B cell (primary cell): ENCODE measurements at regions of chr16 and their contacts with region 1.

Region 1: DNA sequence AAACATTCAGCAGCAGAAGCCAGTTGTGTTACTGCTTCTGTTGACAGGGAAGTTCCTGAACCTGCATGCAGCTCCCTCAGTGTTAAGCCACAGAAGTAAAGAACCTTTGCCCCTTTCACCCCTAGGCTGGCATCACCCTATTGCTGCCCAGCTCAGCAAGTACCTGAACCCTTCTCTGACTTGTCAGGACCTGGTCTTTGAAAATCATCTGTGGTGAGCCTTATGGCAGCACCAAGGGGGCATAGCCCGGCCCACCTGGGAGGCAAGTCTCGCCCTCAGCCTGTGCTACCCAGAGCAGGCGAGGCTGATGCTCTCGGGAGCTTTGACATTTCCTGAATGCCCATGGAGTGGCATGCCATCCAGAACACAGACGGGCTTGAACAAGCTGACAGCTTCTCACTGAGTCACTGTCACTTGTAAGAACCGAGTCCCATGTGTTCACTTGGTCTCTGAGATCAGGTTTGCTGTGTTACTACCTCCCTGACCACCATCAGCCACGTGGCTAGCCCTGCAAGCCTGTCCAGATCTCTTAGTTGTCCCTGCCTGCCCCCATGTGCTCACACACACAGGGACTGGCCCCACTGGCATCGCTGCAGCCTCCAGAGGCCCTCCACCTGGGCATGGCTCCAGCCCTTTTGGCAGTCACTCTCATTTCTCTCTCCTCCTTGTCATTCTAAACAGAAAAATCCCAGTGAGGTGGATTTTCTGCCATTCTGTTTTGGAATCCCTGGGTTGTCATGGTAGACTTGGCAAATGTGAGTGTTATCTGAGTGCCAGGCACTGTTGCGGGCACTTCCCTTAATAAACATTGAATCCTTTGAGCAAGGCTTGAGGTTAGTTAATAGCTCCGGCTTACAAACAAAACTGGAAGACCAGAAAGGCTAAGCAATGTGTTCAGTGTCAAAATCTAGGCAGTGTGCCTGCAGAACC is 2.9 kb upstream of the CARMIL2 start:
- DNase-seq: no peak
- ATAC-seq: no peak
- H3K4me3 ChIP-seq: no peak overlapping the region
- H3K4me3 Mint-ChIP-seq: no peak overlapping the region
- H3K27ac ChIP-seq: no peak overlapping the region
- H3K27ac Mint-ChIP-seq: no peak overlapping the region
- H3K4me1 ChIP-seq: peaks cover 12 to 20% of the 10 kb centered on the region in 2 donors
- H3K4me1 Mint-ChIP-seq: peaks cover 16% of the 10 kb centered on the region
- H3K27me3 ChIP-seq: no peaks in the 10 kb centered on the region
- H3K27me3 Mint-ChIP-seq: no peaks in the 10 kb centered on the region
- CTCF ChIP-seq: no peak

Region 2: DNA sequence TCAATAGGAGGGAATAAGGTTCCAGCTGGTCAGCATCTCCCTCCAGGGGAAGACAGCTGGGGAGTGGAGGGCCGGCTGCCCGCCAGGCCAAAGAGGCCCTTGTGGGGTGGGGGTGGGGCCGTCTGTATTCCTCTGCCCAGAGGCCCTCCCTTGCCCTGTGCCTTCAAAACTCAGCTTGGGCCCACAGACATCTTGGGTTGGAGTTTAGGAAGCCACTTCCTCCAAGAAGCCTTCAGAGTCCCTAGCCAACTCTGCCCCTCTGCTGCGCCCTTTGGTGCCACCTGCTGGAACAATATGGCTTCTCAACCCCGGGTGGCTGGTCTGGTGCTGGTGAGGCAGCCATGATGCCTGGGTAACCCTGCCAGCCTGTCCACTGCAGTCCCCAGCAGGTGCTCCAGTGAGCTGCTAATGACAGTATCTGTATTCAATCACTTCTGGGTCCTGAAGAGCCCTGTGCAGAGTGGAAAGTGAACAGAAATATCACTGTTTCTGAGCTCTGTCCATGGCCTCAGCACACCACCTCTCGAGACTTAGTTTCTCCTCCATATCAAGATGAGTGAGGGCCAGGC is 194.5 kb before region 1 on chr16:
- CTCF ChIA-PET with region 1: no interaction called
- POLR2A ChIA-PET with region 1: no interaction called
- intact Hi-C with region 1: no loop called
- DNase-seq: peak; percentile 55
- ATAC-seq: peak; percentile 59
- H3K4me3 ChIP-seq: no peak overlapping the region
- H3K4me3 Mint-ChIP-seq: no peak overlapping the region
- H3K27ac ChIP-seq: no peak overlapping the region
- H3K27ac Mint-ChIP-seq: no peak overlapping the region
- H3K4me1 ChIP-seq: no peaks in the 10 kb centered on the region
- H3K4me1 Mint-ChIP-seq: no peaks in the 10 kb centered on the region
- H3K27me3 ChIP-seq: no peaks in the 10 kb centered on the region
- H3K27me3 Mint-ChIP-seq: no peaks in the 10 kb centered on the region
- CTCF ChIP-seq: peak; percentile 39

Region 3: GRCh38 chr16:67490335-67491096 is 151.5 kb before region 1 on chr16:
- CTCF ChIA-PET with region 1: interaction called, 44 read pairs
- POLR2A ChIA-PET with region 1: interaction called, 3 read pairs
- intact Hi-C with region 1: loop called (anchors 1 kb)
- DNase-seq: no peak
- ATAC-seq: no peak
- H3K4me3 ChIP-seq: no peak overlapping the region
- H3K4me3 Mint-ChIP-seq: peak overlapping the region; percentile 51
- H3K27ac ChIP-seq: peak overlapping the region; percentile 70 to 89
- H3K27ac Mint-ChIP-seq: peak overlapping the region; percentile 82
- H3K4me1 ChIP-seq: peaks cover 73 to 84% of the 10 kb centered on the region in 2 donors
- H3K4me1 Mint-ChIP-seq: peaks cover 71% of the 10 kb centered on the region
- H3K27me3 ChIP-seq: no peaks in the 10 kb centered on the region
- H3K27me3 Mint-ChIP-seq: no peaks in the 10 kb centered on the region
- CTCF ChIP-seq: no peak

Region 4: DNA sequence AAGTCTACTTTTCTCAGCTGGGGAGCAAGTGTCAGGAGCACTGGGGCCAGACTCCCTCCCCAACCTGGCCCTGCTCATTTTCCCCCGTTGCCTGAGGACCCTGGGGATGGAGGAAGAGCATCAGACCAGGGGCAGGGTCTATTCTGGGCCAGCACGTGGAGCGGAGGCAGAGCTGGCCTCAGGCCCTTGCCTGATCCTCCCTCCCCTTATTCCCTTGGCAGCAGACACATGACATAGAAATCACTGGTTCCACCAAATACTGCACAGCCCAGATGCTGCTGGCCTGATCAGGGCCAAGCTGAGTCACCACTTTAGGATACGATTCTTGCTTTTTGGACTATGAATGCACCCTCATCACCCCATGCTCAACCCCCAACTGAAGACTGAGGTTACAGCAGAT is 142.9 kb before region 1 on chr16:
- CTCF ChIA-PET with region 1: interaction called, 44 read pairs
- POLR2A ChIA-PET with region 1: interaction called, 3 read pairs
- intact Hi-C with region 1: loop called (anchors 1 kb)
- DNase-seq: no peak
- ATAC-seq: no peak
- H3K4me3 ChIP-seq: no peak overlapping the region
- H3K4me3 Mint-ChIP-seq: no peak overlapping the region
- H3K27ac ChIP-seq: no peak overlapping the region
- H3K27ac Mint-ChIP-seq: peak overlapping the region; percentile 70
- H3K4me1 ChIP-seq: peaks cover 13 to 17% of the 10 kb centered on the region in 2 donors
- H3K4me1 Mint-ChIP-seq: peaks cover 29% of the 10 kb centered on the region
- H3K27me3 ChIP-seq: no peaks in the 10 kb centered on the region
- H3K27me3 Mint-ChIP-seq: no peaks in the 10 kb centered on the region
- CTCF ChIP-seq: no peak

Region 5: DNA sequence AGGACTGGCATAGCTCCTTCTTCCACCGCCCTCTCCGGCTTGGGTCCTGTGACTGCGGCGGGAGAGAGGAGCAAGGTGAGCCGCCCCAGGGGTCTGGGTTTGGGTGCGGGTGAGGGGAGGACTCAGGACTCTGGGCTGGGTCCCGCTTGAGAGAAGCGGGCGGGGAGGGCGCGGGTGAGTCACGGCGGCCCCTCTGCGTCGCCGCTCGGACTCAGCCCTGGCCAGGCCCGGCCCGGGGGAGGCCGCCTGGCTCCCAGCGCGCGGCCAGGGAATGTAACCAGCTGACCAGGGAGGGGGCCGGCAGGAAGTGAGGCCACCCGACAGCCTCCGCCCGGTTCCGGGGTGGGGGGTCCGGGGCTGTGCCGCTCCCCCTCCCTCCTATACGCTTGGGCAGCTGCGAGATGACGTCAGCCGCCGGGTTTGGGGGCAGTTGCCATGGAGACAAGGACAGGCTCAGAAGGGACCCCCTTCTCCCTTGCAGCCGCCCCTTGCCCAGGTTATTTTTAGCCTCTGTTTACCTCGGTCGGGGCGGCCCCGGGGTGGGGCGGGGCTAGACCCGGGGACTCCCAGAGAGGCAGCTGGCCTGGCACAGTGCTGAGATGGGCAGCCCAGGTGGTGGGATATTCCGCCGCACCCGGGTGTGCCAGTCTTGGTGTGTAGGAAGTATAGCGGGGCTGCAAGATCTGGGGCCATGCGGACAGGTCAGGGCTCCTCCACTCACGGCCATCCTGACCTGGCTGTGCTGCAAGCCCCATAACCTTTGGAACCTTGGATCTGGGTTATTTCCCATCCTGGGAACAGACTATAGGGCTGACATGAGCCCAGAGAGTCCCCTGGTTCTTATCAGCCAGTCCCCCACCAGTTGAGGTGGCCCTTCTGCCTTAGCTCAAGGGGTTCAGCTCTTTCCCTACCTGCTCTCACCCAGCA is 111.8 kb before region 1 on chr16:
- CTCF ChIA-PET with region 1: interaction called, 80 read pairs
- POLR2A ChIA-PET with region 1: interaction called, 5 read pairs
- intact Hi-C with region 1: no loop called
- DNase-seq: peak; percentile 94
- ATAC-seq: peak; percentile 59
- H3K4me3 ChIP-seq: peak overlapping the region; percentile 65 to 92 (median 85)
- H3K4me3 Mint-ChIP-seq: peak overlapping the region; percentile 95
- H3K27ac ChIP-seq: peak overlapping the region; percentile 96 to 100
- H3K27ac Mint-ChIP-seq: peak overlapping the region; percentile 98
- H3K4me1 ChIP-seq: peaks cover 38 to 70% of the 10 kb centered on the region in 2 donors
- H3K4me1 Mint-ChIP-seq: peaks cover 63% of the 10 kb centered on the region
- H3K27me3 ChIP-seq: no peaks in the 10 kb centered on the region
- H3K27me3 Mint-ChIP-seq: no peaks in the 10 kb centered on the region
- CTCF ChIP-seq: no peak

Region 6: GRCh38 chr16:67555795-67556212 is 86.2 kb before region 1 on chr16:
- CTCF ChIA-PET with region 1: interaction called, 64 read pairs
- POLR2A ChIA-PET with region 1: interaction called, 3 read pairs
- intact Hi-C with region 1: no loop called
- DNase-seq: peak; percentile 34
- ATAC-seq: peak; percentile 72
- H3K4me3 ChIP-seq: peak overlapping the region in 1 of 5 experiments; percentile 11
- H3K4me3 Mint-ChIP-seq: peak overlapping the region; percentile 78
- H3K27ac ChIP-seq: peak overlapping the region; percentile 42 to 68
- H3K27ac Mint-ChIP-seq: peak overlapping the region; percentile 89
- H3K4me1 ChIP-seq: peaks cover 64 to 78% of the 10 kb centered on the region in 2 donors
- H3K4me1 Mint-ChIP-seq: peaks cover 62% of the 10 kb centered on the region
- H3K27me3 ChIP-seq: no peaks in the 10 kb centered on the region
- H3K27me3 Mint-ChIP-seq: no peaks in the 10 kb centered on the region
- CTCF ChIP-seq: no peak

Region 7: GRCh38 chr16:67660564-67661028 is 18.6 kb after region 1 on chr16 and contains the start of gene PARD6A:
- CTCF ChIA-PET with region 1: interaction called, 23 read pairs
- POLR2A ChIA-PET with region 1: interaction called, 4 read pairs
- intact Hi-C with region 1: loop called (anchors 1 kb)
- DNase-seq: peak; percentile 99
- ATAC-seq: peak; percentile 83
- H3K4me3 ChIP-seq: peak within 1 kb of the TSS; percentile 80 to 99 (median 95)
- H3K4me3 Mint-ChIP-seq: peak within 1 kb of the TSS; percentile 97
- H3K27ac ChIP-seq: peak within 1 kb of the TSS; percentile 88 to 93
- H3K27ac Mint-ChIP-seq: peak within 1 kb of the TSS; percentile 97
- H3K4me1 ChIP-seq: peaks cover 14 to 24% of the 10 kb centered on the region in 2 donors
- H3K4me1 Mint-ChIP-seq: peaks cover 35% of the 10 kb centered on the region
- H3K27me3 ChIP-seq: no peaks in the 10 kb centered on the region
- H3K27me3 Mint-ChIP-seq: no peaks in the 10 kb centered on the region
- CTCF ChIP-seq: no peak
- total RNA-seq, gene PARD6A: 13.6 and 14.8 TPM in 2 replicates

Region 8: GRCh38 chr16:67667817-67668494 is 25.9 kb after region 1 on chr16:
- CTCF ChIA-PET with region 1: interaction called, 16 read pairs
- POLR2A ChIA-PET with region 1: no interaction called
- intact Hi-C with region 1: no loop called
- DNase-seq: peak; percentile 89
- ATAC-seq: peak; percentile 81
- H3K4me3 ChIP-seq: peak overlapping the region in 4 of 5 experiments; percentile 67 to 91 (median 80)
- H3K4me3 Mint-ChIP-seq: peak overlapping the region; percentile 91
- H3K27ac ChIP-seq: peak overlapping the region; percentile 77 to 86
- H3K27ac Mint-ChIP-seq: peak overlapping the region; percentile 84
- H3K4me1 ChIP-seq: peaks cover 36 to 49% of the 10 kb centered on the region in 2 donors
- H3K4me1 Mint-ChIP-seq: peaks cover 49% of the 10 kb centered on the region
- H3K27me3 ChIP-seq: no peaks in the 10 kb centered on the region
- H3K27me3 Mint-ChIP-seq: no peaks in the 10 kb centered on the region
- CTCF ChIP-seq: peak; percentile 75